Activated T-helper 2 cell treated with anti-CD3 and anti-CD28 coated beads, Interferon-gamma antibody, Interleukin-2, Interleukin-4, amounts not matched to agents 10 μg/mL and 5 μg/mL and 100 μg/mL, durations not matched to agents 14 hours and 24 hours and 36 hours (primary cell): ENCODE measurements at regions of chr11 and their contacts with region 1.

Region 1: DNA sequence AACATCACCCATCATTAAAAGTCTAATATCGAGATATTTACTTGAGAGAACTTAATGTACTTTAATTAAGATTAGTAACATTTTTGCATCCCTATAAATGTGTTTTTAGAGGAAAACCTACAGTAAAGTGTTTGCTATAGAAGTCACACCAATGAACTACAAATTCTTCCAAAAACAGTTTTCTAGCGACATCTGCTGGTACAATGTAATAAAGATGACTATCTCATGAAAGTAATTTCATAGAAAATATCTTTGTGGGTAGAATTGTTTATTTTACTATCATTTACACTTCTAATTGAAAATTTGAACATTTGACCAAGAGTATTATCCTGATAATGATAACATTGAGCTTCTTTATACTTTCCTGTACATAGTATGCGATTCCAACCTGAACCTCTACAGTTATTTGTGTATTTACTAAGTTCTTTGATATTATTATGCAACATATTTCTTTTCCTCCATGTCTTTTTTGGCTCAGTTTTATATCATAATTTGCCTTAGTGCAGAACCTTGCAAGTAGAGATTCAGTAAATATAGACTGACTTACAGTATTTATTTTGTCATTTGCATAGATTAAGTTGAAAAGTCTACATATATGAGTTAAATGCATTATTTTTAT is 252.7 kb downstream of the TMEM135 start:
- DNase-seq: no peak
- H3K4me3 Mint-ChIP-seq: no peak overlapping the region
- H3K27ac Mint-ChIP-seq: no peak overlapping the region
- H3K4me1 Mint-ChIP-seq: no peaks in the 10 kb centered on the region
- H3K27me3 Mint-ChIP-seq: no peaks in the 10 kb centered on the region

Region 2: GRCh38 chr11:86938900-86939880 is 351.2 kb before region 1 on chr11:
- intact Hi-C with region 1: loop called (anchors 1 kb)
- DNase-seq: no peak
- H3K4me3 Mint-ChIP-seq: no peak overlapping the region
- H3K27ac Mint-ChIP-seq: no peak overlapping the region
- H3K4me1 Mint-ChIP-seq: no peaks in the 10 kb centered on the region
- H3K27me3 Mint-ChIP-seq: peaks cover 8% of the 10 kb centered on the region

Region 3: GRCh38 chr11:86978756-86979608 is 311.4 kb before region 1 on chr11:
- intact Hi-C with region 1: loop called (anchors 1 kb)
- DNase-seq: no peak
- H3K4me3 Mint-ChIP-seq: no peak overlapping the region
- H3K27ac Mint-ChIP-seq: no peak overlapping the region
- H3K4me1 Mint-ChIP-seq: no peaks in the 10 kb centered on the region
- H3K27me3 Mint-ChIP-seq: peaks cover 2% of the 10 kb centered on the region

Region 4: DNA sequence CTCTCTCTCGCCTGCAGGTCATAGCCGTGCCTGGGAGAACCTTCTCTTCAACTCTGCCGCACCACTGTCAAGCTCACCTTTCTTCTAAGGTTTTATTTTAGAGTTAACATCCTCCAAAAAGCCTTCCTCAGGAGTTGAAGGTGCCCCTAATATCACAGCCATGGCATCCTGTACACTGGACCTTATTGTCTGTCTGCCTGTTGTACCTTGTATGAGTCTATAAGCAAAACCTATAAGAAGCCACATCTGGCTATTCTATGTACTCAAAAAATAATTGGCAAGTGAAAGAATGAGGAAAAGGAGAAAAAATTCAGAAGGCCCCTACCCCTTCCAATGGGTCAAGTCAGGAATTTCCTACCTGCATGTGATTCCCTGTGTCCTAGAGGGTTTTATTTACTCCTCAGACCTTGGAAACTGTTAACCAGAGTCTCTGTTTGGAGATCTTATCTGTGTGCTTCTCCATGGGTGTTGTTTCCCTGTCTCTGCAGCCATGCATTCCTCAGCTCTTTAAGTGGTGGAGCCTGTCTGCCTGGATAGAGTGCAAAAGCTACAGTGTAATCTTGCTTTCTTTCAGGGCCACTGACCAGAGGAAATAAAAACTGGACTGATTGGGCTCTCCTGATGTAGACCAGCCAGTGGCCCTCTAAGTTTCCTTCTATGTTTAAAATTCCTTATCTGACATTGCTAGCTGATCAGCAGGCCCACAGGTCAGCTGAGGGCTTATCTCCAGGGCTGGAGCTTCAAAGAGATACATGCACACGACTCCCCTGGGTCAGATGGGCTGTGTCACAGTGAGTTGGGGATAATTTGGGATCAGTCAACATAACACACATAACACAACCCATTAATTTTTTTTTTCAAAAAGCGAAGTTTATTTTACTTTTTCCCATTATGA is 290.3 kb before region 1 on chr11:
- intact Hi-C with region 1: loop called (anchors 5 kb)
- DNase-seq: no peak
- H3K4me3 Mint-ChIP-seq: no peak overlapping the region
- H3K27ac Mint-ChIP-seq: no peak overlapping the region
- H3K4me1 Mint-ChIP-seq: peaks cover 15% of the 10 kb centered on the region
- H3K27me3 Mint-ChIP-seq: no peaks in the 10 kb centered on the region

Region 5: DNA sequence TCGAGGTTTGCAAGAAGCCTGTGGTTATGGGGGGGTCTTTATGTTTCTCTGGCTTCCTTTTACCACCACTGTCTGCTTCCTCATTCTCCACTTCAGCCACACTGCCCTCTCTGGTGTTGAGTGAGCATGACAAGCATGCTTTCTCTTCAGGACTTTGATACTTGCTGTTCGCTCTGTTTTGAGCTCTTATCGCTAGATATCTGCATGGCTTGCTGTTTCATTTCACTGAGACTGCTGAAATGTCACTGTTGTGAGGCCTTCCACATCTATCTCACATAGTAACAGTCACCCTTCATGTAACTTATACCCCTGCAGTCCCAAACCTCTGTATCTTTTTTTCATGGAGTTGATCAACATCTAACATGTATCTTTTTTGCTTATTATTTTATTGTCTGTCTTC is 192.8 kb before region 1 on chr11:
- intact Hi-C with region 1: loop called (anchors 2 kb)
- DNase-seq: peak; percentile 40
- H3K4me3 Mint-ChIP-seq: no peak overlapping the region
- H3K27ac Mint-ChIP-seq: no peak overlapping the region
- H3K4me1 Mint-ChIP-seq: peaks cover 10% of the 10 kb centered on the region
- H3K27me3 Mint-ChIP-seq: no peaks in the 10 kb centered on the region